ENCODE measurements at regions of chr19 and their contacts with region 1.

Region 1: DNA sequence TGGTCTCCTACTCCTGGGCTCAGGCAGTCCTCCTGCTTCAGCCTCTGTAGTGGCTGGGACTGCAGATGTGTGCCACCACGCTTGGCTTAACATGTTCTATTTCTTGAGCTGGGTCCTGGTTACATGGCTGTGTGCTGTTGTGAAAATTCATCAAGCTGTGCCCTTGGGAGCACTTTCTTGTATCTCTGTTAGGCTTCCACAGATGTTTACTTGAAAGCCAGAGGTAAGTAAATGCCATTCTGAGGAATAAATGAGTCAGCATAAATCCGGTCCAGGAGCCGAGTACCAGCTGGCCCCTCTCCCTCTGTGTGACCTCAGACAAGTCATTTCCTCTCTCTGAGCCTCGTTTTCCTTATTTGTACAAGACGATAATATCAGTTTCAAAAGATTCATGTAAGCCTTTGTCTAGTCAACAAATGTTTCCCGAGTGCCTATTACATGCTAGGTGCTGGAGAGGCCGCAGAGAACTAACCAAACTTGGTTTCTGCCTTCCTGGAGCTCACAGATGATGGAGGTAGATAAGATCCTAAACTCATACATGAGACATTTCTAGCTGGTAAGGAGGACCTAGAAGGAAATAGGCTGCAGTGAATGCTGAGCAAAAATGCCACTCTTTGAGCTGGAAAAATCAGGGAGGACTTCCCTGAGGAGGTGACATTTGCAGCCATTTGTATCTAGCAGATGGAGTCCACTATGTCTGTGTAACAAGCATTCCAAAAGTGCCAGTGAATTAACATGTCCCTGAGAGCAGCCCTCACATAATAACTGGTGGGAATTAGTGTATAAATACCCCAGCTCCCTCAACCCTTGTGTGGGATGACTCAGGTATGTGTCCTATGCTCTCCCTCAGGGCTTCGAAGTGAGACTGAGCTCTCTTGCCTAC is 2.7 kb upstream of the RASAL3 start:
- DNase-seq: peak; percentile 88 to 98 (median 96)
- H3K4me3 ChIP-seq: peak overlapping the region in 2 of 7 experiments; percentile 11 to 36
- H3K27ac ChIP-seq: peak overlapping the region in 1 of 2 experiments; percentile 47
- H3K4me1 ChIP-seq: peaks cover 25 to 77% (median 75%) of the 10 kb centered on the region in 4 experiments
- H3K27me3 ChIP-seq: no peaks in the 10 kb centered on the region

Region 2: DNA sequence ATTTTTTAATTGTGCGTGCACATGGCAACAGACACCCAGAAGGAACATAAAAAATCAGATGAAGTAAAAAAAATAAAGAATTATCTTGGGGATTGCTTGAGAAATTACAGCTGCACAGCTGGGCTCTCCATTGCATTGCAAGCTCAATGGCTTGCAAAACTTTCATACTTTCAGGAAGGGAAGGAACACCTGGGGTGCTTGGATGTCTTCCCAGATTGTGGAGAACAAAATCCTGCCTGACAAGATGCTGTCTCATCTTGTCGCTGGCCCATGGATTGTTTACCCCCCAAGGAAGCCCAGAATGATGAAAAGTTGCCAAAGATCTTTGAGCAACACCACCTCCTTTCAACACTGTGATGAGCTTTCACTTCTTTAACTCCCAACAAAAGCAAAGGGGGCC is 428.8 kb before region 1 on chr19:
- CTCF ChIA-PET with region 1: no interaction called
- POLR2A ChIA-PET with region 1: no interaction called
- DNase-seq: no peak
- H3K4me3 ChIP-seq: no peak overlapping the region
- H3K27ac ChIP-seq: no peak overlapping the region
- H3K4me1 ChIP-seq: no peaks in the 10 kb centered on the region
- H3K27me3 ChIP-seq: peaks cover 0 to 4% (median 0%) of the 10 kb centered on the region in 5 experiments

Region 3: GRCh38 chr19:15418588-15419412 is 48.3 kb before region 1 on chr19 and contains the start of gene AKAP8L:
- CTCF ChIA-PET with region 1: interaction called, 30 read pairs
- POLR2A ChIA-PET with region 1: interaction called, 17 read pairs
- DNase-seq: peak; percentile 100
- H3K4me3 ChIP-seq: peak within 1 kb of the TSS; percentile 85 to 97 (median 95)
- H3K27ac ChIP-seq: peak within 1 kb of the TSS; percentile 81 to 91
- H3K4me1 ChIP-seq: peaks cover 15 to 30% (median 20%) of the 10 kb centered on the region in 4 experiments
- H3K27me3 ChIP-seq: no peaks in the 10 kb centered on the region

Region 4: GRCh38 chr19:15432629-15433518 is 34.2 kb before region 1 on chr19:
- CTCF ChIA-PET with region 1: interaction called, 7 read pairs
- POLR2A ChIA-PET with region 1: interaction called, 15 read pairs
- DNase-seq: peak; percentile 91 to 96 (median 94)
- H3K4me3 ChIP-seq: peak overlapping the region; percentile 54 to 93 (median 80)
- H3K27ac ChIP-seq: peak overlapping the region in 1 of 2 experiments; percentile 54
- H3K4me1 ChIP-seq: peaks cover 2 to 31% (median 25%) of the 10 kb centered on the region in 4 experiments
- H3K27me3 ChIP-seq: no peaks in the 10 kb centered on the region

Region 5: DNA sequence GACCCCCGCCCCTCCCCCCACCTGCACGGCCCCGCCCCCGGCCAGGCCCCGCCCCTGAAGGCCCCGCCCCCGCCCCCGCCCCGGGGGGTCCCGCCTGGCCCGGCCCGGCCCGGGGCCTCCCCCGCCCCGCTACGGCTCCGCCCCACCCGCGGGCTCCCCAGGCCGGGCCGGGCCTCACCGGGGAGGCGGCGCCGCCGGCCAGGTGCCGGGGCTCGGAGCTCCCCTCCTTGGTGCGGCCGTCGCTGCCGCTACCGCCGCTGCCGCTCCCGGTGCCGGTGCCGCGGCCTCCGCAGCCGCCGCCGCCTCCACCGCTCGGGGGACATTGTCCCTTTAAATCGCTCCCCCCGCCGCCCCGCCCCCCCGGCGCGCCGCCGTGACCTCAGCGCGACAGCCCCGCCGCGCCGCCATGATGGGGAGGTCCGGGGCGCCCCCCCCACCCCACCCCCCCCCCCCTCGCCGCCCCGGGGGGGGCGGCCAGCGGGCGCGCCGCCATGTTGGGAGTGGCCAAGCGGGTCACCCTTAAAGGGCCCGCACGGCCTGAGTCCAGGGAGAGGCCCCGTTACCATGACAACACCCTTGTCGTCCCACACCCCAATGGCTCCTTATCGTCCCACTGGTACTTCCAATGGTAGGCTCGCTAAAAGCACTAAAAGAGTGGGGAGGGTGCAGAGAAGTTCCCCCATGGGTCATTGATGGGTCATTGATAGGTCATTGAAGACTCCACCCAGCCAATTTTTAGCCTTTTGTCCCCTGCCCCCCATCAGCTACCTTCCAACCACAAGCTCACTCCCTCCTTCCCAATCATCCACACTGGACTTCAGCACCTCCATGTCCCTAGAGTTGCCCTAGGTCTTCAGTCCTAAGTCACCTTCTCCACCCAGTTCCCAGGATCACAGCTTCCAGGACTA is 17.2 kb before region 1 on chr19 and contains the start of gene WIZ:
- CTCF ChIA-PET with region 1: interaction called, 15 read pairs
- POLR2A ChIA-PET with region 1: interaction called, 13 read pairs
- DNase-seq: peak in 2 of 3 donors; percentile 83 to 86
- H3K4me3 ChIP-seq: peak within 1 kb of the TSS; percentile 27 to 86 (median 73)
- H3K27ac ChIP-seq: no peak within 1 kb of the TSS
- H3K4me1 ChIP-seq: peaks cover 0 to 16% (median 8%) of the 10 kb centered on the region in 4 experiments
- H3K27me3 ChIP-seq: no peaks in the 10 kb centered on the region

Region 6: DNA sequence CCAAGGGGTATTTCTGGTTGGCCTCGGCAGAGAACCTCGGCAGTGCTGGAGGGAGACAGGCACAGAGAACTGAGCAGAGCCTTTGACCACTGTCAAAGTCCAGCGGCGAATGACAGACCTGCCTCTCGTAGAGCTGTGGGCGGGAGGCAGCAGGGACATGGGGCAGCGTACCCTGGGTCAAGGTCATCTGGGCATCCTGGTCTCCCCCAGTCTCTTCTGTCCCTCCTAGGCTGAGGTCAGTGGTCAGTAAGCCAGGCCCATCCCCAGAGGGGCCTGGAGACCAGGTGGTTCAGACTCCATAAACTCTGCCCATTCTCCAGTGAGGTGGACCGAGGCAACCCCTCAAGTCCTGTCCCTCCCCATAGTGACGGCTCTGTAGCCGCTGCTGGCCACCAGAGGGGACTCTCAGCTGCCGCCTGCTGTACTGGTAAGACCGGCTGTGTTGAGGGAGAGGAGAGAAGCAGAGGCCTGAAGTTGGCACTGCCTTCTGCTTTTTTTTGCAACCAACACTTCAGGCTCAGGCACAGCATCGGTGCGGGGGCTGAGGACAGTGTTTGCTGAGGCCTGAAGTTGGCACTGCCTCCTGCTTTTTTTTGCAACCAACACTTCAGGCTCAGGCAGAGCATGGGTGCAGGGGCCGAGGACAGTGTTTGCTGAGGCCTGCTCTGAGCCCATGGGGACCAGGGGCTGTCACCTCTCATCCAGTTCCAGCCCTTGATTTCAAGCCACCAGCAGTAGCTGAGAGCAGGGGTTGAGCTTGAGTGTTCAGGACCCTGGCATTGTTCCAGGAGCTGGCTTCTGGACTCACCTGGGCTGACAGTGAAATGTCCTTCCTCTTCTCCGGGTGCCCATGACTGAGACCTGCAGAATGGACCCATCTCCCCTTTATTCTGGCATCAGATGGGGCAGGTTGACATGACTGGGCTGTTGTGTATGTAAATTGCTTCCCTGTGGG is 12.6 kb after region 1 on chr19 and contains the start of gene PGLYRP2:
- CTCF ChIA-PET with region 1: interaction called, 29 read pairs
- POLR2A ChIA-PET with region 1: interaction called, 7 read pairs
- DNase-seq: peak; percentile 71 to 85 (median 83)
- H3K4me3 ChIP-seq: no peak within 1 kb of the TSS
- H3K27ac ChIP-seq: no peak within 1 kb of the TSS
- H3K4me1 ChIP-seq: peaks cover 0 to 17% (median 15%) of the 10 kb centered on the region in 4 experiments
- H3K27me3 ChIP-seq: no peaks in the 10 kb centered on the region

Region 7: DNA sequence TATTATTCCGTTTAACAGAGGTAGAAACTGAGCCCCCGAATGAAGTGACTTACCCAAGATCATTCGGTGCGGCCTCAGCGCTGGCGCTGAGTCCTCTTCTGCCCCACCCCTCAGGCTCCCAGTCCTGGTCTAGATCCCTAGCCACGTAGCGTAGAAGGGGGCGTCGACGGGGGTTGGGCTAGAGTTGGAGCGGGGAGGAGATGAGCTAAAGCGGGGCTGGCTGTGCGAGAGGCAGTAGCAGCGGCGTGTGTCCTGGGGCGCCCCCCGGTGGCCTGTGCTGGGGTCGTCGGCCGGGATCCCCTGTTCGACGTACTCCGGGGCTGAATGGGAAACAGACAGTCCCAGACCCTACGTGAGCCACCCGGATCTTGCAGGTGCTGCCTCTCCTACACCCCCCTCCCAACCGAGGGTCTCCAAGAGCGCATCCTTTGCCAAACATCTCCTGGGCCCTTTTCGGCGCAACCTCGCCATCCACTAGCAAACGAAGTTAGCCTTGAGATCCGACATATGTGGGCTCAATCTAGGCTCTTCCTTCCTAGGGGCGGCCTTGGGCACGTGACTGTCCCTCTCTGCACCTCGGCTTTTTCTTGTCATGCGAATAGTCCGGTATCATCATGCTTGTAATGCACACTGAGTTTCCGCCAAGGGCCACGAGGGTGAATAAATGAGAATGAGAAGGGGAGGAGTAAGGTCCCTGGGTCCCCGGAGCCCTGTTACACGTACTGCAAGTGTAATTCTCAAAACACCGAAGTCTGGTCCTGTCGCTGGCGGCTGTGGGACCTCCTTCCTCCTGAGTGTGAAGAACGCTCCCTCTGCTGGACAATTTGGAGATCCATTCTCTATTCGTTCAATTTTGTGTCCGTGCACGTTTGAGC is 88.9 kb after region 1 on chr19:
- CTCF ChIA-PET with region 1: interaction called, 10 read pairs
- POLR2A ChIA-PET with region 1: interaction called, 4 read pairs
- DNase-seq: peak; percentile 96 to 99 (median 98)
- H3K4me3 ChIP-seq: peak overlapping the region; percentile 16 to 76 (median 58)
- H3K27ac ChIP-seq: no peak overlapping the region
- H3K4me1 ChIP-seq: peaks cover 0 to 20% (median 17%) of the 10 kb centered on the region in 4 experiments
- H3K27me3 ChIP-seq: peaks cover 0 to 6% (median 0%) of the 10 kb centered on the region in 5 experiments

Region 8: GRCh38 chr19:15595069-15595468 is 128.0 kb after region 1 on chr19:
- CTCF ChIA-PET with region 1: no interaction called
- POLR2A ChIA-PET with region 1: no interaction called
- DNase-seq: peak; percentile 37 to 86 (median 74)
- H3K4me3 ChIP-seq: peak overlapping the region in 1 of 7 experiments; percentile 19
- H3K27ac ChIP-seq: no peak overlapping the region
- H3K4me1 ChIP-seq: peaks cover 0 to 3% (median under 1%) of the 10 kb centered on the region in 4 experiments
- H3K27me3 ChIP-seq: peaks cover 0 to 1% (median 0%) of the 10 kb centered on the region in 5 experiments

Measured in common myeloid progenitor, CD34-positive (primary cell).